Dorsolateral prefrontal cortex (tissue), 120 donors: ENCODE measurements at regions of chr2 and their contacts with region 1.

Region 1: GRCh38 chr2:201451292-201452057 is at the starts of genes STRADB and TRAK2:
- DNase-seq: peak; percentile 95 to 98 (median 97)
- H3K4me3 ChIP-seq: peak within 1 kb of the TSS; percentile 67 to 99 (median 93)
- H3K27ac ChIP-seq: peak within 1 kb of the TSS; percentile 68 to 97 (median 92)
- H3K27me3 ChIP-seq: no peaks in the 10 kb centered on the region
- CTCF ChIP-seq: peak in 32 of 56 donors; percentile 4 to 61 (median 32)
- total RNA-seq, gene STRADB: 22.7 to 49.9 (median 33.9) TPM
- total RNA-seq, gene TRAK2: 52.3 to 113 (median 69.5) TPM

Region 2: DNA sequence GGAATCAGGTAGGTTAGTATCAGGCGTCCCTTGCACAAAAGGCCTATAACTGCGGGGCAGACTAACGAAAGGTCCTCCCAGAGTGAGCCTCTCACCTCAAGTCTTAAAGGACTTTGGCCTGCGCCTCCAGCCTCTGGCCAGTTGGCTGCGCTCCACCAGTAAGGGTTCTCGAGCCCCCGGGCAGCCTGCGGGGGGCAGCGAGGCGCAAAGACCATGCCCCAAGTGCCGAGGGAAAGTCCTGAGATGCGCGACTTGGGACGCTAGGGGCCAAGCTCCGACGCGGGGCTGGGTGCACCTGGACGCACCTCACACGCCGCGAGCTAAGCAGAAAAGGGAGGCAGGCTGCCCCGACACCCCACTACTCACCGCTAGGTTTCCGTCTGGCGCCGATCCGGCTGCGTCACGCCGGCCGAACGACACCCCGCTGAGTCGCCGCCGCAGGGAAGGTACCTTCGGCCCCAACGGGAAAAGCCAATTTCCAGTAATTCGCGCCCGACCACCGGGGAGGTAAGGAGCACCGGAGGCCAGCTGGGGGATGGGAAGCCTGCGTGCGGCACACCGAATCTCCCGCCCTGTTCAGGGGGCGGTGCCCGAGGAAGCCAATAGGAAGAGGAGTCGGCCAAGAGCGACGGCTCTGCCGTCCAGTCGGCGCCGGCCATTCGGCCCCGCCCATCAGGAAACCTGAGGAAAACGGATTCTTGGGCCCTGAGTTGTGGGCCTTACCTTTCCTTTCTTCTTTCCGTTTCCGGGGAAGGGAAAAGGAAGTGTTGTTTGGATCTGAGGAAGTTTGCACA is 488.2 kb before region 1 on chr2 and contains the start of gene ORC2:
- intact Hi-C with region 1: loop called in 1 of 2 experiments (anchors 10 kb)
- DNase-seq: peak; percentile 81 to 97 (median 94)
- H3K4me3 ChIP-seq: peak within 1 kb of the TSS; percentile 53 to 100 (median 94)
- H3K27ac ChIP-seq: peak within 1 kb of the TSS in 57 of 59 donors; percentile 27 to 90 (median 80)
- H3K27me3 ChIP-seq: no peaks in the 10 kb centered on the region
- CTCF ChIP-seq: peak in 49 of 56 donors; percentile 5 to 61 (median 39)
- total RNA-seq, gene ORC2: 26.1 to 54.8 (median 38.1) TPM

Region 3: GRCh38 chr2:201642579-201643215 is 191.2 kb after region 1 on chr2:
- intact Hi-C with region 1: loop called (anchors 2 kb)
- DNase-seq: peak; percentile 68 to 91 (median 76)
- H3K4me3 ChIP-seq: peak overlapping the region; percentile 63 to 97 (median 88)
- H3K27ac ChIP-seq: peak overlapping the region; percentile 48 to 98 (median 93)
- H3K27me3 ChIP-seq: no peaks in the 10 kb centered on the region
- CTCF ChIP-seq: peak in 34 of 56 donors; percentile 4 to 65 (median 36)

Region 4: GRCh38 chr2:201746551-201746950 is 295.1 kb after region 1 on chr2:
- intact Hi-C with region 1: no loop called
- DNase-seq: no peak
- H3K4me3 ChIP-seq: no peak overlapping the region
- H3K27ac ChIP-seq: no peak overlapping the region
- H3K27me3 ChIP-seq: no peaks in the 10 kb centered on the region
- CTCF ChIP-seq: no peak

Region 5: DNA sequence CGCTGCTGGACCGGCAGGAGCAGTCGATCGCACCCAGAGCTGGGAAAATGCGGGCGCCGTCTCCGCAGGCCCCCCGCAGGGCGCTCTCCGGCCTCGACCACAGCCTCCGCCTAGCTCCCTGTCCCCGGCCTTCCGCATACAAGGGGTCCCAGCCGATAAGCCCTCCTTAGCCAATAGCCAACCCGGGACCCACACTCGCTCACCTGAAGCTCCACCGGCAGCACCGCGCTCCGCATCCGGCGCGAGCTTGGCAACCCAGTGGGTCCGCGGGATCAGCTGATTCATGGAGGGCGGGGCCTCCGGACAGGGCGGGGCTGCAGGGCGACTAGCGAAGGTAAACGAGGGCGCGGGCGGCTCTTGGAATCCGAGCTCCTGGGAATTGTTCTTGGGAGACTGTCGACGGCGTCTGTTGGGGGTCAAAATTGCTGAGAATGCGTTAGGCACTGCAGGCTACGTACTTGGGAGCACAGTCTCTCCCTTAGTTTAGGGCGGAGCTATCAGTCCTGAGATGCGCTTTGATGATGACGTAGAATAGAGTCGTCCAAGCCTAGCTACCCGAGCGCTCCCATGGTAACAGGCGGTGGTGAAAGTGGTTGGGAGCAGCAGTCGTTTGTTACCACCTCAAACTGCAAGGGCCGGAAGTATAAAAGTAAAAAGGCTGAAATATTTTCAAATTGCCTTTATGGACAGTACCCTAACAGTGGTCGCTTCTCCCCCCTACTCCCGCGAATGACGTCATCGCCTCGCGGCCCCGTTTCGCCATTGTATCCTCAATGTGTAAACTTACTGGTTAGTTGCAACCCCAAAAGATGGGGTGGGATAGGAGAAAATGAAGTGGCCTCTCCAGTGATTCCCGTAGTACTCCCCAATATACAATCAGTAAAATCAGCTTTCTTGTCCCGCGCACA is 329.5 kb after region 1 on chr2 and contains the start of gene ALS2:
- intact Hi-C with region 1: loop called in 1 of 2 experiments (anchors 10 kb)
- DNase-seq: peak; percentile 88 to 98 (median 95)
- H3K4me3 ChIP-seq: peak within 1 kb of the TSS; percentile 62 to 100 (median 95)
- H3K27ac ChIP-seq: peak within 1 kb of the TSS; percentile 37 to 96 (median 84)
- H3K27me3 ChIP-seq: no peaks in the 10 kb centered on the region
- CTCF ChIP-seq: peak in 18 of 56 donors; percentile 5 to 47 (median 20)
- total RNA-seq, gene ALS2: 34.9 to 82.1 (median 57.1) TPM